Naive thymus-derived CD4-positive, alpha-beta T cell (primary cell): ENCODE measurements at regions of chr15 and their contacts with region 1.

Region 1: DNA sequence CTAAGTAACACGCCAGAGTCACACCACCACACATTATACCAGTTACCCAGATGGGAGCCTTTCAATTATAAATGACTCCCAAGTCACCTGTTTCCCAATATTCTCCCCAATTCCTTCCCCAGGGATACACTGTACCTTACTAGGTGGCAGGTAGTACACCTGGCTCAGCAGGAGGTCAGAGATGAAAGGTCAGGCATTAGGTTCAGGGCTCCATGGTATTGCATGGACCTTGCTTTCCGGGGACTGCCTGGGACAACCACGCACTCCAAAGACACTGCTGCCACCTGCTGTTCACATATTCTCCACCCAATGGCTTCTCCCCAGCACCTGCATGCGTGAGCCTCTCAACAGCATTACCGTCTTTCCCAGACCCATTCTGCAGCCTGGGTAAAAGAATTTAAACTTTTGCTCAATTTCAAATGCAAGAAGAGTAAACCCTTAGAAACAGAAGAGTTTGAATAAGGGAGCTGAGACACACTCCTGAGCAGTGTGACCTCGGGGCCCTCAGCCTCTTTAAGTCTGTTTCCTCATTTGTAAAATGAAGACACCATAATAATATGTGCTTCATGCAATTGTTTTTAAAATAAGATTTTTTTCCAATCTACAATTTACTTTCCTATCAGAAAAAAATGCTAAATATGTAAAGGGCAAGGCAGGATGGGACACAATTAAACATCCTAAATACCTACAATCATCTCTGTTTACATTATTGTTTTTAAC is 28.0 kb upstream of the LACTB start:
- DNase-seq: peak; percentile 40 to 70 (median 60)
- ATAC-seq: peak; percentile 92
- H3K4me3 ChIP-seq: no peak overlapping the region
- H3K4me3 Mint-ChIP-seq: no peak overlapping the region
- H3K27ac ChIP-seq: no peak overlapping the region
- H3K27ac Mint-ChIP-seq: no peak overlapping the region
- H3K4me1 ChIP-seq: no peaks in the 10 kb centered on the region
- H3K4me1 Mint-ChIP-seq: peaks cover 0 to 8% (median 0%) of the 10 kb centered on the region in 7 donors
- H3K27me3 ChIP-seq: no peaks in the 10 kb centered on the region
- H3K27me3 Mint-ChIP-seq: peaks cover 0 to 7% (median 0%) of the 10 kb centered on the region in 5 donors

Region 2: DNA sequence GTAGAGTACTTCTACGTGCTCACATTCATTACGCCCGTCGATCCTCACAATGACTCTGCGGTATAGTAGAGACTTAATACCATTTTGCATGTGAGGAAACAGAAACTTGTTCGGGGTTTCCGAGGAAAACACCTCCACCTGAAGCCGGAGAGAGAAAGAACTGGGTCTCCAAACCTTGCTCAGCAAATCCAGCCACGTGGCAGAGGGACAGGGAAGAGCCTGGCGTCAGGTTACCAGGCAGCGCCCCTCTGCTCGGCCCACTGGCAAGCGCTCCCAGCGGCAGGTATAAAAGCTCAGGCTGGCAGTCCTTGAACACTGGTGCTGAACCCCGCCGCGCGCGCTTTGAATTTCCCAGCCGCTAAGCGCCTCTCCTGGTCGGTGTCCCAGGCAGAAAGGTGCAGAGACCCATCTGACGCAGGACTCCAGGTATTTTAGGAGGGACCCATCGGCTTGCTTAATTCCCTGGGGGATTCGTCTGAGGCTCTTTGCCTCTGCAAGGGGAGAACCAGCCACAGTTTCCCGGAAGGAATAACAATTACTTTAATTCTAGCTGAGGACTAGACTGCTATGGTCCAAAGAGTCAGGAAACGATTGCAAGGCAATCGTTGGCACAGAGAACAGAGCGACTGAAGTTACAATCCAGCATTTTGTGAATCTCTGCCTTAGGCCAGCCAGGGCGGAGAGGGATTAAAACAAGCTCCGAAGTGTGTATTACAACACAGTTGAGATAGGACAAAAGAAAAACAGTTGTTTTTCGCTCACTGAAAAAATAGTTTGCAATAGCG is 1026.8 kb before region 1 on chr15 and contains the start of gene C2CD4A:
- CTCF ChIA-PET with region 1: no interaction called
- POLR2A ChIA-PET with region 1: no interaction called
- intact Hi-C with region 1: loop called in 1 of 2 experiments (anchors 2 kb)
- DNase-seq: peak; percentile 33 to 61 (median 52)
- ATAC-seq: peak; percentile 76
- H3K4me3 ChIP-seq: peak within 1 kb of the TSS; percentile 56
- H3K4me3 Mint-ChIP-seq: peak within 1 kb of the TSS; percentile 81 to 97 (median 92)
- H3K27ac ChIP-seq: no peak within 1 kb of the TSS
- H3K27ac Mint-ChIP-seq: peak within 1 kb of the TSS in 2 of 9 donors; percentile 5 to 20
- H3K4me1 ChIP-seq: peaks cover 13 to 17% of the 10 kb centered on the region in 2 donors
- H3K4me1 Mint-ChIP-seq: peaks cover 10 to 31% (median 23%) of the 10 kb centered on the region in 7 donors
- H3K27me3 ChIP-seq: peaks cover 5 to 13% of the 10 kb centered on the region in 2 donors
- H3K27me3 Mint-ChIP-seq: peaks cover 25 to 70% (median 28%) of the 10 kb centered on the region in 5 donors
- total RNA-seq, gene C2CD4A: not detected

Region 3: DNA sequence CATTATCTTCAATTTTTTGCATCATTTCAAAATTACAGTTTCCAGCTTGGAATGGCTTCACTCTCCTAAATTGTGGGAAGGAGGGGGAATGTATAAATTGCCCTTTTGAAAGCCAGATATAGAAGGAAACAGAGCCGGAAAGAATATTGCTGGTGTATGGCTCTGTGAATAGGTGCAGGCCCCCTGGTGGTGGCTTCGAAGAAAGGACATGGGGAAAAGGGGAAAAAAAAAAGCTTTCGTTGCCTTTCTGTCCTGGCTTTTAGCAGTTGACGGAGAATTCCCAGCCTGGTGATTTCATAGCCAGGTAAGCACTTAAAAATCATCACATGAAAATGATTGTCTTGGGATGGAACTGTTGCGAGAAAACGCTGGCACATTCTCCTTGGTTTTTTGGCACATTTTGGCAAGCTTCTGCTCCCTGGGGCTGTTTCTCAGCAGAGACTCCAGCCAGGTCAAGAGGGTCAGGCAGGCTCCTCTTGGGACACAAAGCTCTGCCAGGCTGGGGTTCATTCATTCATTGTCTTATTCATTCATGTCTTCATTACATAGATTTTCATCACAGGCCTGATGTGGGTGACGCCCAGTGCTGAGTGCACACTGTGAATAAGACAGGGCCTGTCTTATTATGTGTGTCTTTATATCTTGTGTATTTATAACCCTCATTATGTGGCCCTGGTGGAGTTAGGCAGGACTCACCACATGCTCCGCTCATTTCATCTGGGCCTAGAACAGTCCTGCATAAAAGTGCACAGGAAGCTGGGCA is 351.1 kb before region 1 on chr15:
- CTCF ChIA-PET with region 1: no interaction called
- POLR2A ChIA-PET with region 1: no interaction called
- intact Hi-C with region 1: loop called in 1 of 2 experiments (anchors 2 kb)
- DNase-seq: peak in 6 of 9 donors; percentile 8 to 33 (median 16)
- ATAC-seq: peak; percentile 60
- H3K4me3 ChIP-seq: no peak overlapping the region
- H3K4me3 Mint-ChIP-seq: peak overlapping the region in 1 of 10 donors; percentile 30
- H3K27ac ChIP-seq: no peak overlapping the region
- H3K27ac Mint-ChIP-seq: no peak overlapping the region
- H3K4me1 ChIP-seq: no peaks in the 10 kb centered on the region
- H3K4me1 Mint-ChIP-seq: peaks cover 0 to 12% (median 0%) of the 10 kb centered on the region in 7 donors
- H3K27me3 ChIP-seq: no peaks in the 10 kb centered on the region
- H3K27me3 Mint-ChIP-seq: peaks cover 0 to 3% (median 0%) of the 10 kb centered on the region in 5 donors

Region 4: DNA sequence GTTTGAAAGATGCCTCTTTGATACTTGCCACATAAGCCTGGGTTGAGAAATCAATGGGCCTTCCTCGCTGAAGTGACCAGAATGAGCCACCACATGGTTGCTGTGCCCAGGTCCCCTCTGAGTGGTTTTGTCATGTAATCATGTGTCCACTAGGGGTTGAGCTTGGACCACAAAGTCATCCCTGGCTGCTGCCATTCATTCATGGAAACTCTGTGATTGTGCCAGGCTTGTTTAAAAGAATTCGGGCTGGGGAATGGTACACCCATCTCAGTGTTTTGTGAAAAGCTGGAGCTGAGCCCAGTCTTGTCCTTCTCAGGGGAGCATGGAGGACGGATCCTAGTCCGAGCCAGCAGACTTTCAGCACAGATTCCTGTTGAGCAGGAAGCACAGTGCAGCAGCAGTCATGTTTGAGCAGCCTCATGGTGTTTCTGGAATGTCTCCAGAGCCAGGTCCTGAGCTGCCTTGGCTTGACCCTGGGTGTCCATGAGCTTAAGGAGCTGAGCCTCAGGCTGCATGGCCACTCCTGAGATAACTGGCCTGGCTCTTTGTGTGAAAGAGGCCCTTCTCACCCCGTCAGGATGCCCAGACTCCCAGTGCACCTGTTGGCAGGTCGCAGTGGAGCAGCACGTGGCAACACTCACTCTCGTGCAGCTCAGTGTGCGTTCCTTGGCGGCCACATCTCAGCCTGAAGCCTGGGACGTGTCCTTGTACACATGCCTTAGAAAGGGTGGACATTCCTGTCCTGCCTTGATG is 311.4 kb before region 1 on chr15:
- CTCF ChIA-PET with region 1: interaction called, 3 read pairs
- POLR2A ChIA-PET with region 1: no interaction called
- intact Hi-C with region 1: loop called in 1 of 2 experiments (anchors 5 kb)
- DNase-seq: peak in 1 of 9 donors; percentile 2
- ATAC-seq: peak; percentile 44
- H3K4me3 ChIP-seq: no peak overlapping the region
- H3K4me3 Mint-ChIP-seq: no peak overlapping the region
- H3K27ac ChIP-seq: no peak overlapping the region
- H3K27ac Mint-ChIP-seq: no peak overlapping the region
- H3K4me1 ChIP-seq: no peaks in the 10 kb centered on the region
- H3K4me1 Mint-ChIP-seq: peaks cover 0 to 4% (median 0%) of the 10 kb centered on the region in 7 donors
- H3K27me3 ChIP-seq: no peaks in the 10 kb centered on the region
- H3K27me3 Mint-ChIP-seq: peaks cover 0 to 4% (median 3%) of the 10 kb centered on the region in 5 donors

Region 5: GRCh38 chr15:62847900-62848489 is 245.7 kb before region 1 on chr15:
- CTCF ChIA-PET with region 1: interaction called, 3 read pairs
- POLR2A ChIA-PET with region 1: no interaction called
- intact Hi-C with region 1: loop called (anchors 1 to 2 kb)
- DNase-seq: peak in 3 of 9 donors; percentile 10 to 38 (median 11)
- ATAC-seq: no peak
- H3K4me3 ChIP-seq: no peak overlapping the region
- H3K4me3 Mint-ChIP-seq: no peak overlapping the region
- H3K27ac ChIP-seq: no peak overlapping the region
- H3K27ac Mint-ChIP-seq: no peak overlapping the region
- H3K4me1 ChIP-seq: no peaks in the 10 kb centered on the region
- H3K4me1 Mint-ChIP-seq: no peaks in the 10 kb centered on the region
- H3K27me3 ChIP-seq: no peaks in the 10 kb centered on the region
- H3K27me3 Mint-ChIP-seq: peaks cover 0 to 17% (median 9%) of the 10 kb centered on the region in 5 donors

Region 6: DNA sequence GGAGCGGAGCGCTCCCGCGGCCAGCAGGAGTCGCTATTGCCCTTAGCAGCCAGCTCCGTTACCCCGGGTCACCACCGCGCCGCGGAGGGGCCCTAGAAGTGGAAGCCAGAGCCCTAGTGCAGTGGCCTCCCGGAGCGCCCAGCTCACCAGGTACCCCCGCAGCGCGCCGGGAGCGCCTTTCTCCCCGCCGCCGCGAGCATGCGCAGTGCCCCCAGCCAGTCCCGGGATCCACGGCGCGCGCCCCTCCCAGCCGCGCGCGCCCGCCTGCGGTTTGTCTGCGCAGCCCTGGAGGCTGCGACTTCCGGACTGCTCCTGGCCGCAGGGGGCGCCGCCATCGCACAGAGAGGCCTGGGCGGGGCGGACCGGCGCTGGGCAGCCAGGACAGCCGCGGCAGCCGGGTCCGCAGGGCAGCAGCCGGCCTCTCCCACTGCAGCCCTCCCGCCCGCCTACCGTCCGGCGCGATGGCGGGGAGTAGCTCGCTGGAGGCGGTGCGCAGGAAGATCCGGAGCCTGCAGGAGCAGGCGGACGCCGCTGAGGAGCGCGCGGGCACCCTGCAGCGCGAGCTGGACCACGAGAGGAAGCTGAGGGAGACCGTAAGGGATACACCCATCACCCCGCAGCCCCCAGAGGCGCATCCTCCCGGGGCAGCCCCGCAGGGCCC is 45.4 kb before region 1 on chr15:
- CTCF ChIA-PET with region 1: interaction called, 61 read pairs
- POLR2A ChIA-PET with region 1: interaction called, 6 read pairs
- intact Hi-C with region 1: loop called (anchors 1 kb)
- DNase-seq: peak; percentile 72 to 90 (median 85)
- ATAC-seq: peak; percentile 92
- H3K4me3 ChIP-seq: peak overlapping the region; percentile 76
- H3K4me3 Mint-ChIP-seq: peak overlapping the region; percentile 84 to 97 (median 94)
- H3K27ac ChIP-seq: peak overlapping the region; percentile 59
- H3K27ac Mint-ChIP-seq: peak overlapping the region; percentile 25 to 85 (median 68)
- H3K4me1 ChIP-seq: peaks cover 7 to 16% of the 10 kb centered on the region in 2 donors
- H3K4me1 Mint-ChIP-seq: peaks cover 13 to 42% (median 26%) of the 10 kb centered on the region in 7 donors
- H3K27me3 ChIP-seq: peaks cover 17 to 27% of the 10 kb centered on the region in 2 donors
- H3K27me3 Mint-ChIP-seq: peaks cover 30 to 60% (median 36%) of the 10 kb centered on the region in 5 donors

Region 7: DNA sequence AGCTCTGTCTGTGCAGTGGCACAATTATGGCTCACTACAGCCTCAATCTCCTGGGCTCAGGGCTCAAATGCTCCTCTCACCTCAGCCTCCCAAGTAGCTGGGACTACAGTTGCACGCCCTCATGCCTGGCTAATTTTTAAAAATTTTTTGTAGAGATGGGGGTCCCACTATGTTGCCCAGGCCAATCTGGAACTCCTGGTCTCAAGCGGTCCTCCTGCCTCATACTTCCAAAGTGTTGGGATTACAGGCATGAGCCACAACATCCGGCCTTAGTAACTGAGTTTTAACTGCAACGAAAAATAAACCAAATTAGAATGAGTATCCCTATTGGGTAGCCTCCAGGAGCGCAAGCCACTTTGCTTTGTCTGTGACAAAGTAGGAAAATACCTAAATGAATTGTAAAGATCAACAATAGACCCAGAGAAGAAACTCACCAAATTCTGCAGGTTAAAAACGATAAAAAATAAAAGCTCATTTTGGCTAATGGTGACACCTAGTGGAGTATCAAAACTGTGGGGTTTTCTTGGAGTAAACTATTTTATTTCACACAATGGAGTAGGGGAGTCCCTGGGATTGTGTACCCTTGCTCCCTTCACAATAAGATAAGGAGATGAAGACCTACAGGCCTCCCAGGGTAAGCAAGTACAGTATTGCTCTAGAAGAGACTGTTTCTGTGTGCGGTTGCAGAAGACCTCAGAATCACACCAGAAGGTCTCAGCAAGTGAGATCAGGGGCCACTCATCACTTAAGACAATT is 309.0 kb after region 1 on chr15:
- CTCF ChIA-PET with region 1: interaction called, 4 read pairs
- POLR2A ChIA-PET with region 1: no interaction called
- intact Hi-C with region 1: loop called in 1 of 2 experiments (anchors 1 kb)
- DNase-seq: peak in 6 of 9 donors; percentile 7 to 60 (median 50)
- ATAC-seq: peak; percentile 67
- H3K4me3 ChIP-seq: no peak overlapping the region
- H3K4me3 Mint-ChIP-seq: no peak overlapping the region
- H3K27ac ChIP-seq: no peak overlapping the region
- H3K27ac Mint-ChIP-seq: no peak overlapping the region
- H3K4me1 ChIP-seq: peaks cover 0 to 3% of the 10 kb centered on the region in 2 donors
- H3K4me1 Mint-ChIP-seq: peaks cover 0 to 19% (median 0%) of the 10 kb centered on the region in 7 donors
- H3K27me3 ChIP-seq: no peaks in the 10 kb centered on the region
- H3K27me3 Mint-ChIP-seq: peaks cover 0 to 6% (median 4%) of the 10 kb centered on the region in 5 donors